CD8-positive, alpha-beta T cell (primary cell): ENCODE measurements at regions of chr7 and their contacts with region 1.

Region 1: DNA sequence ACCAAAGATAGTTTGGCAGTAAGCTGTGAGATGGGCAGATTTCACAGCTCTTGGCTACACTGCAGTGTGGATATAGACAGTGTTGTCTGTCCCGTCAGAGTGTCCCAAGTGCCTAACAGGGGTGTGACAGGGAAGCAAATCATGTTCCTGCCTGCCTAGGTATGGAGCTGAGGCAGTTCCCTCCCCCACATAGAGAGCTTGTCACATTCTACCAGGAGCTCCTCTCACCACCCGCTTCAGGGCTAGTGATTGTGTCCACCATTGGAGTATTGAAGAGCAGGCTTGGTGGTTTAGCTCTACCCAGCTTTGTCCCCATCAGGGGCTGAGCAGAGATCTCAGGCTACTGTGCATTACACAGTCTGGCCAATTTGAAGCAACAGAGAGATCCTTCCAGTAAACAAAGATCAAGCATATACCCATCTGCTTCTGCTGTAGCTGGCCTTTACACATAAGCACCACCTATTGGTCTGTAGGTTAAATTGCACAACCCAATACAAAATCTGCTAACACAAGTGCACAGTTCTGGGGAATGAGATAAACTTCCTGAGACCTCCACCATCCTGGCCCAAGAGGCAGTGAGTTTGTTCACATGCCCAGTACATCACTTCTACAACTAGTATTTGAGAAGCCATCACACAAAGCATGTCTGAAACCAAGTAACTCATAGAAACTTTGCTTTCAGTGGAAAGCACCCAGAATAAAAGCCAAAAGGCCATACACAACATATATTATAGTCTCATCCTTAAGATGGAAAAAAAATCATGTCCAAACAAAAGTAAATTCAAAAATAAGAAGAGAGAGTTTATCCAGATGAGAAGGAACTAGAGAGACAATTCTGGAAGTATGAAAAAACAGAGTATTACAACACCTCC is 67.3 kb downstream of the GLCCI1 start:
- DNase-seq: peak in 4 of 9 experiments; percentile 5 to 71 (median 56)
- ATAC-seq: peak; percentile 92
- H3K4me3 ChIP-seq: no peak overlapping the region
- H3K4me3 Mint-ChIP-seq: no peak overlapping the region
- H3K27ac ChIP-seq: peak overlapping the region in 1 of 2 experiments; percentile 40
- H3K27ac Mint-ChIP-seq: peak overlapping the region; percentile 58
- H3K4me1 ChIP-seq: peaks cover 5% of the 10 kb centered on the region
- H3K4me1 Mint-ChIP-seq: peaks cover 26% of the 10 kb centered on the region
- H3K27me3 ChIP-seq: no peaks in the 10 kb centered on the region
- H3K27me3 Mint-ChIP-seq: no peaks in the 10 kb centered on the region
- CTCF ChIP-seq: peak; percentile 55

Region 2: DNA sequence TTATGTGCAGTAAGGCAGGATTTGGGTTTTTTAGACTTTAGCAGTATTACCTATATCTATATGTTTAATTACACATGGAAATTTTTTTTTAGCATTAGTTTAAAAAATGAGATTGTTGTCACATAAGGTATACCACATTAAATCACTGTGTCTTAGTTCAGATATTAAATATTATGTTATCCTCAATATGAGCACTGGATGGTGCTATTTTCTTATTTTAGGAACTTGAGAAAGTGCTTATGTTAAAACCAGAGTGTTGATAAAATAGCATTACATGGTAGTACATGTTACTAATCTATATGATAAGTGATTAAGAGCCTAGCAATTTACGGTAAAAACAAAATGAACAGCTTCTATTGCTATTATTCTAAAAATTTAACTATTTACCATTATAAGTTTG is 440.4 kb before region 1 on chr7:
- CTCF ChIA-PET with region 1: interaction called, 6 read pairs
- POLR2A ChIA-PET with region 1: no interaction called
- intact Hi-C with region 1: loop called (anchors 10 kb)
- DNase-seq: peak in 2 of 9 experiments; percentile 39 to 57
- ATAC-seq: peak; percentile 52
- H3K4me3 ChIP-seq: no peak overlapping the region
- H3K4me3 Mint-ChIP-seq: no peak overlapping the region
- H3K27ac ChIP-seq: no peak overlapping the region
- H3K27ac Mint-ChIP-seq: no peak overlapping the region
- H3K4me1 ChIP-seq: no peaks in the 10 kb centered on the region
- H3K4me1 Mint-ChIP-seq: peaks cover 2% of the 10 kb centered on the region
- H3K27me3 ChIP-seq: no peaks in the 10 kb centered on the region
- H3K27me3 Mint-ChIP-seq: no peaks in the 10 kb centered on the region
- CTCF ChIP-seq: peak; percentile 69

Region 3: DNA sequence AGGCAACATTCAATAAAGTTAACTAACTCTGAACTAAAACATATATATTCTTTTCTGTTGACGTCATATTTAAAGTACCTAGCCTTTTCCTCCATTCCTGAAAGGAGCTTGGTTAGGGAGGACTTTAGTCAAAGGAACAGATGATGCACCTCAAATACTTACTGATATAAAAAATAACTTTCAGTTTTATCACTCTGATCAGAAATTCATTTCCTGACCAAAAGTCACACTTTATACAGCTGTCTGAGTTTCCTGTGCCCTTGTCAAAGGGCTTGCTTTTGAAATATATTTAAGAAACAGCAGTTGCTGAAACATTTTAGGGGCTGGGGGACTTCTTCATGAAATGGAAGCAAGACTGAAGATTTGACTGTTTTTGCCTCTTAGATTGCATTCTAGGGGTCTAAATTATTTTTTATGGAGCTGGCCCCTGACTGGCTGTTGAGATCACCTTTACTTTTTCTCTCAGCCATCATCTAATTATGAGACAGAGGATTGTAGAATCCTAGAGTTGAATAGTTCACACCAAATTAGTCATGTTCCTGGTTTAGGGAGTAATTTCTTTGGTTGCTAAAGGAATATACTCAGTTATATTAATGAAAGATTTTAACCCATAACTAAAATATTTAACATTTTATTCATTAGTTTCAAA is 20.7 kb before region 1 on chr7:
- CTCF ChIA-PET with region 1: no interaction called
- POLR2A ChIA-PET with region 1: no interaction called
- intact Hi-C with region 1: loop called in 1 of 2 experiments (anchors 2 kb)
- DNase-seq: peak in 3 of 9 experiments; percentile 6 to 67 (median 51)
- ATAC-seq: peak; percentile 84
- H3K4me3 ChIP-seq: peak overlapping the region in 1 of 2 experiments; percentile 16
- H3K4me3 Mint-ChIP-seq: peak overlapping the region; percentile 53
- H3K27ac ChIP-seq: peak overlapping the region in 1 of 2 experiments; percentile 76
- H3K27ac Mint-ChIP-seq: peak overlapping the region; percentile 83
- H3K4me1 ChIP-seq: peaks cover 26% of the 10 kb centered on the region
- H3K4me1 Mint-ChIP-seq: peaks cover 46% of the 10 kb centered on the region
- H3K27me3 ChIP-seq: no peaks in the 10 kb centered on the region
- H3K27me3 Mint-ChIP-seq: no peaks in the 10 kb centered on the region
- CTCF ChIP-seq: no peak

Region 4: GRCh38 chr7:8056431-8056830 is 20.5 kb after region 1 on chr7:
- CTCF ChIA-PET with region 1: no interaction called
- POLR2A ChIA-PET with region 1: no interaction called
- intact Hi-C with region 1: no loop called
- DNase-seq: no peak
- ATAC-seq: no peak
- H3K4me3 ChIP-seq: no peak overlapping the region
- H3K4me3 Mint-ChIP-seq: no peak overlapping the region
- H3K27ac ChIP-seq: no peak overlapping the region
- H3K27ac Mint-ChIP-seq: no peak overlapping the region
- H3K4me1 ChIP-seq: peaks cover 2% of the 10 kb centered on the region
- H3K4me1 Mint-ChIP-seq: peaks cover 11% of the 10 kb centered on the region
- H3K27me3 ChIP-seq: no peaks in the 10 kb centered on the region
- H3K27me3 Mint-ChIP-seq: no peaks in the 10 kb centered on the region
- CTCF ChIP-seq: no peak

Region 5: GRCh38 chr7:8190119-8190895 is 154.4 kb after region 1 on chr7:
- CTCF ChIA-PET with region 1: interaction called, 16 read pairs
- POLR2A ChIA-PET with region 1: interaction called, 3 read pairs
- intact Hi-C with region 1: loop called in 1 of 2 experiments (anchors 1 kb)
- DNase-seq: peak; percentile 32 to 84 (median 70)
- ATAC-seq: peak; percentile 86
- H3K4me3 ChIP-seq: no peak overlapping the region
- H3K4me3 Mint-ChIP-seq: no peak overlapping the region
- H3K27ac ChIP-seq: no peak overlapping the region
- H3K27ac Mint-ChIP-seq: no peak overlapping the region
- H3K4me1 ChIP-seq: no peaks in the 10 kb centered on the region
- H3K4me1 Mint-ChIP-seq: peaks cover 16% of the 10 kb centered on the region
- H3K27me3 ChIP-seq: no peaks in the 10 kb centered on the region
- H3K27me3 Mint-ChIP-seq: peaks cover 5% of the 10 kb centered on the region
- CTCF ChIP-seq: peak; percentile 89